Right ventricle myocardium inferior (tissue), 1 donor: ENCODE measurements at regions of chr6 and their contacts with region 1.

Region 1: DNA sequence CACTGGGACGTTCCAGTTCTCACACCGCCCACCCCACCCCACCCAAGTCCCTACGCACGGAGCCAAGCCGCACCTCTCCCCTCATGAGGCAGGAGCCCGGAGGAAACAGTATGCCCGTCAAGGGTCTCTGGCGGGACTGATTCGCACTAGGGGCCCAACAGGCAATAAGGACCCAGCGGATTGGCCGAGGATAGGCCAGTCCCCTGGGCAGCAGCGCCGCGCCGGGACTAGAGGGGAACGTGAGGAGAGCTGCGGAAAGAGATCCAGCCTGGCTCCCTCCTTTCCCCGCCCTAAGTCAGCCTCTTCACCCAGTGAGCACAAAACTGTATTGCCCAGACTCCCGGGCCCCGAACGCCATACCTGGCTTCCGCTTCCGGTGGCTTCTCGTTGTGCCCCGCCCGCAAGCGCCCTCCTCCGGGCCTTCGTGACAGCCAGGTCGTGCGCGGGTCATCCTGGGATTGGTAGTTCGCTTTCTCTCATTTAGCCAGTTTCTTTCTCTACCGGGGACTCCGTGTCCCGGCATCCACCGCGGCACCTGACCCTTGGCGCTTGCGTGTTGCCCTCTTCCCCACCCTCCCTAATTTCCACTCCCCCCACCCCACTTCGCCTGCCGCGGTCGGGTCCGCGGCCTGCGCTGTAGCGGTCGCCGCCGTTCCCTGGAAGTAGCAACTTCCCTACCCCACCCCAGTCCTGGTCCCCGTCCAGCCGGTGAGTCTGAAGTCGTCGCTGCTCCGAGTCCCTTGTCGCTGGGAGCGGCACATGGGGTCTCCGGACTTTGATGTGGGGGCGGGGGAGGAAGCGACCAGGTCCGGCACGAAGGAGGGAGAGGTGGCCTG is at the start of gene CSNK2B:
- DNase-seq: peak; percentile 99
- ATAC-seq: peak; percentile 92
- total RNA-seq, gene CSNK2B: 97.3 TPM

Region 2: DNA sequence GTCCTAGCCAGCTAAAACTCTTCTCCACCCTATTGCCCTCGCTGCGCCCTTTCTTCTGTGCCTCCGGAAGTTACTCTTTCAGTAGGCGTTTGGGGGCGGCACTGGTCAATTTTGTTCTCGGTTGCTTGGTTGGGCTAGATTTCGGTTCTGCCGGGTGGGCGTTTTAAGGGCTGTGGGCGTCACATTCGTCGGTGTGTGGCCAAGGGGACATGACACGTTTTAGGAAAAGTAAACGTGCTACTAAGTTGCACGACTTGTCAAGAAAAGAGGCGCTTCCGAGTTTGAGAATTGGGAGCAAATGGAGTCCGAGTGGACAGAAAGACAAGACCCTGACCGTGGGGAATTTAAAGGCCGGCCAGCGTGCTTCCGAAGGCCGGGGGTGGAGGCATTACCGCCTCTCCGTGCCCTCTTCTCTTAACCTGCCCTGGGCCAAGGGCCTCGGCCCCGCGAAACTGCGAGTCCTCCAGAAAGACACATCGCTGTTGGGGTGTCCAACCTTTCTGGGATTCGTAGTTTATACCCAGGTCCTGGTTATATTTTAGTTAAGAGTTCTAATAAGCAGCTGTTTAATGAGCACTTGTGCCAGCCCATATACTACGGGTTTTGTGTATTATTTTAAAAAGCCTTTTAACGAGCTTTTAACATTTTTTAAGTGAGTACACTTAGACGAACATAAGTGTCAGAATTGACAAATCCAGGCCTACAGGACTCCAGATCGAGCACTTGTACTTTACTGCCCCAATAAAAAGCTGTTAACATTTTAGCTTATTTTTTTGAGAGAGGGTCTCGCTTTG is 12.6 kb before region 1 on chr6:
- intact Hi-C with region 1: loop called (anchors 1 kb)
- DNase-seq: peak; percentile 90
- ATAC-seq: peak; percentile 86

Region 3: GRCh38 chr6:31702819-31703522 is 37.3 kb after region 1 on chr6 and contains the start of gene ABHD16A:
- intact Hi-C with region 1: loop called (anchors 2 kb)
- DNase-seq: peak; percentile 100
- ATAC-seq: peak; percentile 98
- total RNA-seq, gene ABHD16A: 26.9 TPM

Region 4: DNA sequence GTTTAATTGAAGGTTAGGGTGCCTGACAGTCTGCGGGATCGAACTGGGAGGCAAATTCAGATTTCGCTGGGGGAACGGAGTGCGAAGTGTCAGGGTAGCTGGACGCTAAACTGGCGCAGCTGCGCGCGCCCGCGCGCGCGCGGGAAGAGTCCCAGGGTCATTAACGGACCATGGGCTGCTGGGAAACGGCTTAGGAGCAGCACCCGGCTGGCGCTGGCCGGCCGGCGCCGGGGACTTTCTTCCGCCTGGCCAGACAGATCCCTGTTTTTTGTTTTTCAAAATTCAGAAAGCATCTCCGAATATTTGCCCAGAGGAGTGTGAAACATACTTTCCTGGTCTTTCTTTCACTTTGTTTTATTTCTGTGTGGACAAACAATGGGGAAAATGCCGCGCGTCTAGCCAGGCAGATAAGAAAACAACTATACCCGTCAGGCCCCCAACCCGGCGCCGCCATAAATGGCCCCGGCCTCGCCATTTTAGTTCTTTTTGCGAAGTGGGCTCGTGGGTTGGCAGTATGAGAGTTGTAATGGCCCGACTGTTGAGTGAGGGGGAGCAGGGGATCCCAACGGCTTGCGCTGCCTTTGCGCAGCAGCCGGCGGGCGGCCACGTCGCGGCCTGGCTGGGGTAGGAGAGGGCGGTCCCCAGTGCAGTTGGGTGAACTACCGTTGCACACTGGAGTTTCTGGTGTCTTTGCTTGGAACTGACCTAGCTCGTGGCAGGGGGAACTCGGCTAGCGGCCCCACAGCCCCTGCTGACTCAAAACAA is 168.9 kb after region 1 on chr6:
- intact Hi-C with region 1: loop called (anchors 5 kb)
- DNase-seq: peak; percentile 94
- ATAC-seq: peak; percentile 92

Region 5: DNA sequence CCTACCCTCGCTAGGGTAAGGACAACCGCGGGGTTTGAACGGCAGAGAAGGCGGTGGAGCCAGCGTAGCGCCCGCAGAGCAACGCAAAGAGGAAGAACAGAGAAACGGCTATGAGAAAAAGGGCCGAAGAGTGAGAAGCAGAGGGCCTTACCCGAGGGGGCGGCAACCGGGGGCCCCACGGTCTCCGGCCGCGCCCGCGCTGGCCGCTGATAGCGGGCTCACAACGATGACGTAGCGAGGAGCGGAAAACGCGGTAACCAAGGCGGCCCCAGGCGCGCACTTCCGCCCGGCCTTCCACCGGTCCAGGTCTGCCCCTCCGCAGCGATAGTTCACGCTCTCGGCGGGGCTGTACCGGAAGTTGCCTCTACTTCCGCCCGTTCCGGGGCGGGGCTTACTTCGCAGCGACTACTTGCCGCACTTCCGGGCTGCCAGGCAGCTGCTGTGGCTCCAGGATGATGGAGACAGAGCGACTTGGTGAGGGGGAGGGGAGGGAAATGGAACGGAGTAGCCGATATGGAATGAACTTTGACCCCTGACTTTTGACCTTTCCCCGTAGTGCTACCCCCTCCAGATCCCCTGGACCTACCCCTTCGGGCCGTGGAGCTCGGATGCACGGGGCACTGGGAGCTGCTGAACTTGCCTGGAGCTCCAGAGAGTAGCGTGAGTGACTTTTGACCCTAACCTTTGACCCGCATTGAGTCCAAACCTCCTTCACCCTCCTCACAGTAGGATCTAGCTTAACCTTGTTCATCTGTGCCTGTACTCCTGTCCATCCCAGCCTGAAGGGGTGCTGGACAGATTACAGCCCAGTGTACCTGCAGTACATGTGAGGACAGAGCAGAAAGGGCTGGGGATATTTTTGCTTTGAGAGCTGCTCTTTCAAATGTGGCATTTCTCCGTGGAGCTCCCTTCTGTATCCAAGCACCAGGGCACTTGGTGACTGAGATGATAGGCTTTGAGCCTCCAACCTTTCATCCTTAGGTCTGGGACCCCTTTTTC is 293.3 kb after region 1 on chr6 and contains the starts of genes NELFE and SKIC2:
- intact Hi-C with region 1: loop called (anchors 5 kb)
- DNase-seq: peak; percentile 98
- ATAC-seq: peak; percentile 99
- total RNA-seq, gene NELFE: 41.9 TPM
- total RNA-seq, gene SKIC2: 30.7 TPM

Region 6: GRCh38 chr6:31971993-31972708 is 306.4 kb after region 1 on chr6 and contains the start of gene DXO:
- intact Hi-C with region 1: no loop called
- DNase-seq: peak; percentile 98
- ATAC-seq: peak; percentile 96
- total RNA-seq, gene DXO: 9.8 TPM

Region 7: DNA sequence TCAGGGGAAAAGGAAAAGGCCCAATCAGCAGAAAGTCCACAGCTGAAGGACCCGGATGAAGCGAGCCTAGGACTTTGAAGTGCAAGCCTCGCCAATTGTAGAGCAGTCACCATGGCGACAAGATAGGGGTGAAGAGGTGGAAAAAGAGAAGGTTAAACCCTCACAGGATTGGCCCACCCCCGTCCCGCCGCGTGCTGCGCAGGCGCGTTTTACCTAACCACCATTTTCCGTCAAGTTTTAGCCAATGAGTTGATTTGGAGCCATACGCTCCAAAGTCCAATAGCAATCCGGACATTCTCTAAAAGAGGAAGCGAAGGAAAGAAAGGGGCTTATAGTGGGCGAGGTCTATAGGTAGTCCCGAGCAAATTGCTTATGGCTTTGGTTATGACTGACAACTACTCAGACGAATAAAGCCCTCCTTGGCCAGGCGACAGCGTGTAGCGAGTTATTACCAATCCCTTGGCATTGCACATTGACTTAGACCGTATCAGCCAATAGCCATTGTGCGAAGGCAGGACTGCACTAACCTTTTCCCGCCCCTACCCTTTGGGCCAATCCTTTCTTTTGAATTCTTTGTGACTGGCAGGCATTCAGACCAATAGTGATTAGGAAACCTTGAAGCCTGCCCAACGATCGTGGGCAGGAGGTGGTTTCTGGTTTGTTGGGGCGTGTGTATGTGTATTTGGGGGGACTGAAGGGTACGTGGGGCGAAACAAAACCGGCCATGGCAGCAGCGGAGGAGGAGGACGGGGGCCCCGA is 512.2 kb after region 1 on chr6 and contains the start of gene RNF5:
- intact Hi-C with region 1: loop called (anchors 10 kb)
- DNase-seq: peak; percentile 96
- ATAC-seq: peak; percentile 88
- total RNA-seq, gene RNF5: 97.5 TPM